ENCODE measurements at regions of chr6 and their contacts with region 1.

Region 1: GRCh38 chr6:46993846-46994245 is 48.3 kb downstream of the ADGRF1 start:
- H3K4me3 ChIP-seq: no peak overlapping the region
- H3K27ac ChIP-seq: no peak overlapping the region
- H3K4me1 ChIP-seq: peaks cover 7% of the 10 kb centered on the region
- CTCF ChIP-seq: no peak

Region 2: GRCh38 chr6:46862381-46862780 is 131.5 kb before region 1 on chr6:
- CTCF ChIA-PET with region 1: interaction called, 18 read pairs
- POLR2A ChIA-PET with region 1: no interaction called
- H3K4me3 ChIP-seq: no peak overlapping the region
- H3K27ac ChIP-seq: no peak overlapping the region
- H3K4me1 ChIP-seq: no peaks in the 10 kb centered on the region
- CTCF ChIP-seq: no peak

Region 3: DNA sequence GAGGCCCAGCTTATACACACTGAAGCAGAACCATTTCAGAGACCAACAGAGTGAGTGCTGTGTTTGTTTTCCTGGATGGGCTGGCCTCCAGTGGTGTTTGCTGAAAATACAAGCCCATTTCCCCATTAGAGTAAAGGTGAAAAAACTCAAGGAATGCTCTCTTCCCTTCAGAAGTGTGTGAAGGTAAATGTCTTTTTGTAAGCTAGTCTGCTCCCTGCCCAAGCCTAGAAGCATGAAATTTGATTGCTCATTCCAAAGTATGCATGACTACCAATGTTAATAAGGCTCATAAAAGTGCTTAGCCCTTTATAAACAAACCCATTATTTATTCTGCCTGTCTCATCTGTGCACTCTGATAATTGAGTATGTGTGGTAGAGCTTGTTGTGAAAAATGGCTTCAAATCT is 10.8 kb before region 1 on chr6:
- CTCF ChIA-PET with region 1: interaction called, 14 read pairs
- POLR2A ChIA-PET with region 1: no interaction called
- H3K4me3 ChIP-seq: no peak overlapping the region
- H3K27ac ChIP-seq: no peak overlapping the region; the same call in 1 of the 2 replicates
- H3K4me1 ChIP-seq: peaks cover 12% of the 10 kb centered on the region
- CTCF ChIP-seq: no peak

Region 4: GRCh38 chr6:47042275-47042791 is 48.5 kb after region 1 on chr6 and contains the start of gene ADGRF1:
- CTCF ChIA-PET with region 1: interaction called, 14 read pairs
- POLR2A ChIA-PET with region 1: no interaction called
- H3K4me3 ChIP-seq: no peak within 1 kb of the TSS
- H3K27ac ChIP-seq: no peak within 1 kb of the TSS
- H3K4me1 ChIP-seq: peaks cover 5% of the 10 kb centered on the region; the same call in 1 of the 2 replicates
- CTCF ChIP-seq: no peak

Region 5: DNA sequence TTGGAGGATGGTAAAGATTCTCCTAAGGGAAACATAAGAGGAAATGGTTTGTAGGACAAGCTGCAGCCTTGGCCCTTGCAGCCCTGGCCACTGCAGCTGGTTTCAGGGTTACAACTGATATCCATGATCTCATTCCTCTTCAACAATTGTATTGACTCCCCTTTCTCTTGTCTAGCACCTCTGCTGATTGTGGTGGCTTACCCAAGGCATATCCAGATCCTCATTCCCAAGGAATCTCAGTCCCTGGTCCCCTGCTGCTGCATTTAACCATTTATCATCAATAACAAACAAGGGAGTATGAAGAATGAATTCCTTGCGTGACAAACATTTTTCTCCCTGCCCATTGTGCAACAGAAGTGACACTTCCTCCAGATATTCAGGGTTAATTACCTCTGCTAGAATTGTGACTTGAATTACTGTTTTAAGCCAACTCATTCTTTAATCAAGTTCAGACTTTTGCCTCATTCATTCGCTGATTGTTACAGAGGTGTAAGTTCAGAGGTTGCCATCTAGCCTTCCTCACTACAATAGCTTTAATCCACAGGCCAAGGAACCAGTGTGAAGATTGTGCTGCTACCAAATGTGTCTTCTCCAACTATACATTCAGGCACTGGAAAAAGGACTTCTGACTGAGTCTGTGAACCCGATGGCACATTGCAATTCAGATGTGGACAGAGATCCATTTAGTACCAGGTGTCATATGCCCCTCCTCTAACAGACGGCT is 159.3 kb after region 1 on chr6:
- CTCF ChIA-PET with region 1: no interaction called
- POLR2A ChIA-PET with region 1: no interaction called
- H3K4me3 ChIP-seq: no peak overlapping the region
- H3K27ac ChIP-seq: no peak overlapping the region
- H3K4me1 ChIP-seq: peaks cover 2% of the 10 kb centered on the region; the same call in 1 of the 2 replicates
- CTCF ChIP-seq: no peak

Measured in HEK293 (cell line).